ENCODE measurements at regions of chr2 and their contacts with region 1.

Region 1: DNA sequence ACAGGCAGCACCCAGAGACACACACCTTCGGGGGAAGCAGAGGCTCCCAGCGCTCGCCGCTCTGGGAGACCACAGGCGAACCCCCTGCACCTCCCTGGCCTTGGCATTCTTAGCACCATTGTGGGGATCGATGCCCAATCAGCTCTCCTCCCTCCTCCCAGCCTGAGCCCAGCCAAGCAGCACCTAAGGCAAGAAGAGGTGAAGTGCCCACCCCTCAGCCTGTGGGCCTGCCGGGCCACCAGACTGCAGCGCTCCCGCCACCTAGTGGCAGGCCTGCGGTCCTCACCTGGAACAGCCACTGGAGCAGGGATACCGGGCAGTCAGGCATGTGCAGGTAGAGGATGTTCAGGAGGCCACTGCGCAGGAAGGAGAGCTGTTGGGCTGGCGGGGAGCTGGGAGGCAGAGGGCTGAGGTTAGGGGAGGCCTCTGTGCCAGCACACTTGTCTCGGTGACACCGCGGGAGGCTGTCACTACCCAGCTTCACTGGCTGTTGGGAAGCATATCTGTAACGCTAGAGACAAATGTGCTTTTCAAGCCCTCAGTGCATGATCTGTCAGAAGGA is 35.2 kb downstream of the FAM178B start:
- DNase-seq: peak; percentile 83
- CTCF ChIP-seq: peak; percentile 97

Region 2: GRCh38 chr2:96274355-96275056 is 676.7 kb before region 1 on chr2:
- in situ Hi-C with region 1: no loop called
- DNase-seq: no peak
- CTCF ChIP-seq: no peak

Region 3: DNA sequence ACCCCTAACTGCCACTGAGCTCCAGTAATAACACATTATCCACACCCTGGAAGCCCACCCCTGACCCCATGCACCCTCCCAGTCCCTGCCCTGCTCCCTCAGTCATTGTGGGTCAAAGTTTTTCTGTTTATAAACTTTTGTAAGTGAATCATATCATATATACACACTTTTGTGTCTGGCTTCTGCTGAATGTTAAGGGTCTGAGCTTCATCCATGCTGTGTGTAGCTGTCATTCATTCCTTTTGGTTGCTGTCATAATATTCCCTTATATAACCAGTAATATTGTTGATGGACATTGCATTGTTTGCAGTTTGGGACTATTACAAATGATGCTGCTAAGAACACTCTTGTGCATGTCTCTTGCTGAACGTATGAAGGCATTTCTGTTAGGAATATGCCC is 176.0 kb before region 1 on chr2:
- in situ Hi-C with region 1: no loop called
- DNase-seq: no peak
- CTCF ChIP-seq: no peak

Region 4: GRCh38 chr2:96856776-96857673 is 94.1 kb before region 1 on chr2:
- in situ Hi-C with region 1: loop called (anchors 10 kb)
- DNase-seq: peak; percentile 35
- CTCF ChIP-seq: no peak

Measured in GM13977 (cell line).